ENCODE measurements at regions of chr5 and their contacts with region 1.

Region 1: GRCh38 chr5:42889311-42889933 is 77.7 kb upstream of the SELENOP start:
- DNase-seq: peak; percentile 77 to 91 (median 81)
- H3K4me3 ChIP-seq: no peak overlapping the region
- H3K27ac ChIP-seq: no peak overlapping the region
- H3K4me1 ChIP-seq: peaks cover 0 to 10% of the 10 kb centered on the region in 2 donors
- H3K27me3 ChIP-seq: no peaks in the 10 kb centered on the region
- CTCF ChIP-seq: peak; percentile 87 to 97 (median 92)
- POLR2A ChIP-seq: no peak

Region 2: GRCh38 chr5:41869739-41870626 is 1019.4 kb before region 1 on chr5 and contains the start of gene OXCT1:
- intact Hi-C with region 1: loop called in 1 of 2 experiments (anchors 10 kb)
- DNase-seq: peak; percentile 73 to 87 (median 79)
- H3K4me3 ChIP-seq: peak within 1 kb of the TSS; percentile 27 to 85 (median 68)
- H3K27ac ChIP-seq: peak within 1 kb of the TSS in 4 of 5 donors; percentile 62 to 89 (median 77)
- H3K4me1 ChIP-seq: peaks cover 12 to 15% of the 10 kb centered on the region in 2 donors
- H3K27me3 ChIP-seq: no peaks in the 10 kb centered on the region
- CTCF ChIP-seq: no peak
- POLR2A ChIP-seq: peak; percentile 71 to 82
- total RNA-seq, gene OXCT1: 9.0 to 27.9 (median 12.7) TPM

Region 3: DNA sequence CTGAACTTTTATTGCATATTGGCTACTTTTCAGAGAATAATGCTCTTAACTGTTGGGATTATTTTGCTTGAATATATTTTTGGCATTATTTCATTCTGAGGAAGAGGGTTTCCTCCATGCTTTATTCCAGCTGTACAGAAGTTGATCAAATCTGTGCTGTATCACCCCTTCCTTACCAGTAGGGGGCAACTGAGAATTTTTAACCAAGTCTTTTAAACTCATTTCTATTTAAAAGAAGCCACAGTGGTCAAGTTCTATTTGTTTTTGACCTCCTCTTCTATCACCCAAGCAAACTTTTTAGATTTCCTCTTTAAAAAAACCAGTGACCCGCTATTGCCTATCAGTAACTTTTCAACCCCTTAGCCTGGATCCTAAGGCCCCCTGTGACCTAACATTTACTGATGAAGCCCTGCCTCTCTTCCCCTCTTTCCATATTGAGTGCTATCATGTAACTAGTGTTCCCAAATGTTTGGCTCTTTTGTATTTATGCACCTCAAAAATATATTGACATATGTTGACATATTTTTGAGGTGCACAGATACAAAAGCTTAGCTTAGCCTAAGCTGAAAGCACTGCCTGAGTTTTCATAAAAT is 883.8 kb before region 1 on chr5:
- intact Hi-C with region 1: loop called in 1 of 2 experiments (anchors 10 kb)
- DNase-seq: no peak
- H3K4me3 ChIP-seq: no peak overlapping the region
- H3K27ac ChIP-seq: no peak overlapping the region
- H3K4me1 ChIP-seq: no peaks in the 10 kb centered on the region
- H3K27me3 ChIP-seq: no peaks in the 10 kb centered on the region
- CTCF ChIP-seq: peak; percentile 40 to 74 (median 60)
- POLR2A ChIP-seq: no peak

Region 4: DNA sequence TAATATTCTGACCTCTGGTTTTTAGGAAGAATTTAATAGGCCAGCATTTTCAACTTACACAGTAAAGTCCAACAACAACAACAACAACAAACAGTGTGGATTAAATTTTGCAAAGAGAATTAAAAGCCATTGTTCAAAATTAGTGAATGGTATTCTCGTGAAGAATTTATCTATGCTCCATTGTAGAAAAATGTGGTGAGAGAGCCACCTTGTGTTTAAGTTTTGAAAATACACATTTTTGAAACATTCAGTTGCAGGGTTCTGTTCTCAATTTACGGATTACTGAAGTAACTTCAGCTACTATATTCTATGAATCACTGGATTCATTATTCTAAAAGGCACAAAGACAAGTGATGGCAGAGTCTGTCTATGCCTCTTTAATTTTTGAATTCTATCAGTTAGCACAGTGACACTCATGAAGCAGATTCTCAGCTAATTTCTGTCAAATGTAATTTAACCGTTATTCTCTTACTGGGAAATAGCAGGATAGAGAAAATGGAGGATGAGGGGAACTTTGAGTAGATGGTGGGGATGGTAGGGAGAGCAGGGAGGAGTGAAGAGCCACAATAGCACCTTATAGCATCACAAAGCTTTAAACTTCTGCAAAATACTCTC is 121.8 kb before region 1 on chr5:
- intact Hi-C with region 1: loop called in 1 of 2 experiments (anchors 10 kb)
- DNase-seq: no peak
- H3K4me3 ChIP-seq: no peak overlapping the region
- H3K27ac ChIP-seq: no peak overlapping the region
- H3K4me1 ChIP-seq: peaks cover 0 to under 1% of the 10 kb centered on the region in 2 donors
- H3K27me3 ChIP-seq: no peaks in the 10 kb centered on the region
- CTCF ChIP-seq: peak; percentile 30 to 73 (median 65)
- POLR2A ChIP-seq: no peak

Region 5: GRCh38 chr5:42791151-42791550 is 98.3 kb before region 1 on chr5:
- intact Hi-C with region 1: loop called in 1 of 2 experiments (anchors 10 kb)
- DNase-seq: no peak
- H3K4me3 ChIP-seq: no peak overlapping the region
- H3K27ac ChIP-seq: no peak overlapping the region
- H3K4me1 ChIP-seq: no peaks in the 10 kb centered on the region
- H3K27me3 ChIP-seq: no peaks in the 10 kb centered on the region
- CTCF ChIP-seq: no peak
- POLR2A ChIP-seq: no peak

Region 6: GRCh38 chr5:42811591-42812446 is 77.6 kb before region 1 on chr5 and contains the start of gene SELENOP:
- intact Hi-C with region 1: loop called in 1 of 2 experiments (anchors 10 kb)
- DNase-seq: peak; percentile 72 to 87 (median 78)
- H3K4me3 ChIP-seq: peak within 1 kb of the TSS; percentile 27 to 79 (median 52)
- H3K27ac ChIP-seq: peak within 1 kb of the TSS; percentile 57 to 87 (median 75)
- H3K4me1 ChIP-seq: peaks cover 14 to 25% of the 10 kb centered on the region in 2 donors
- H3K27me3 ChIP-seq: no peaks in the 10 kb centered on the region
- CTCF ChIP-seq: no peak
- POLR2A ChIP-seq: peak; percentile 94
- total RNA-seq, gene SELENOP: 253 to 1,654 (median 825) TPM